HCT116 (cell line): ENCODE measurements at regions of chr1 and their contacts with region 1.

Region 1: GRCh38 chr1:44089371-44090049 is 29.1 kb upstream of the KLF17 start:
- DNase-seq: no peak
- ATAC-seq: peak; percentile 70
- H3K4me3 ChIP-seq: no peak overlapping the region
- H3K27ac ChIP-seq: no peak overlapping the region
- H3K4me1 ChIP-seq: peaks cover 14 to 18% of the 10 kb centered on the region in 2 experiments
- H3K27me3 ChIP-seq: no peaks in the 10 kb centered on the region
- CTCF ChIP-seq: no peak
- POLR2A ChIP-seq: no peak
- RAD21 ChIP-seq: no peak

Region 2: GRCh38 chr1:43801203-43801602 is 288.3 kb before region 1 on chr1:
- CTCF ChIA-PET with region 1: no interaction called
- POLR2A ChIA-PET with region 1: no interaction called
- RAD21 ChIA-PET with region 1: no interaction called
- intact Hi-C with region 1: no loop called
- DNase-seq: no peak
- ATAC-seq: no peak
- H3K4me3 ChIP-seq: no peak overlapping the region
- H3K27ac ChIP-seq: no peak overlapping the region
- H3K4me1 ChIP-seq: peaks cover 0 to 10% of the 10 kb centered on the region in 2 experiments; a peak in 1 of 4 replicates
- H3K27me3 ChIP-seq: no peaks in the 10 kb centered on the region
- CTCF ChIP-seq: no peak
- POLR2A ChIP-seq: no peak
- RAD21 ChIP-seq: no peak

Region 3: DNA sequence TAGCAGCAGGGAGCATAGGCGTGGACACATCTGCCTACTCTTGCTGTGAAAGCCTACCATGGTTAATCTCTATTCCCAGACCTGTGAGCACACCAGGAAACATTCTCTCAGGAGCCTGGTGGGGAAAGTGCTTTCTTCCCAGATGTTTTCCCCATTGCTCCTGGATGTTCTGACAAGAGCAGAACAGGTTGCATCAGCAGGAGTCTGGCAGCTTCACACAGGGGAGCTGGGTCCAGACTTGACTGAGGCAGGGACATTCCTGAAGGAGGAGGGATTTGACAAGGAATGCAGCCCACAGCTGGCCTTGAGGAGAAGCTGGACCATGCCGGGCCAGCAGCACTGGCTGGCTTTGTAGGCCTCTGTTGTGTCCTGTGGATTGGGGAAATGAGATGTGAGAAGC is 176.9 kb before region 1 on chr1:
- CTCF ChIA-PET with region 1: no interaction called
- POLR2A ChIA-PET with region 1: no interaction called
- RAD21 ChIA-PET with region 1: no interaction called
- intact Hi-C with region 1: no loop called
- DNase-seq: no peak
- ATAC-seq: peak; percentile 29; the same call in 1 of the 2 replicates
- H3K4me3 ChIP-seq: no peak overlapping the region
- H3K27ac ChIP-seq: no peak overlapping the region
- H3K4me1 ChIP-seq: peaks cover 0 to 33% of the 10 kb centered on the region in 2 experiments; a peak in 2 of 4 replicates
- H3K27me3 ChIP-seq: no peaks in the 10 kb centered on the region
- CTCF ChIP-seq: no peak
- POLR2A ChIP-seq: no peak
- RAD21 ChIP-seq: no peak

Region 4: DNA sequence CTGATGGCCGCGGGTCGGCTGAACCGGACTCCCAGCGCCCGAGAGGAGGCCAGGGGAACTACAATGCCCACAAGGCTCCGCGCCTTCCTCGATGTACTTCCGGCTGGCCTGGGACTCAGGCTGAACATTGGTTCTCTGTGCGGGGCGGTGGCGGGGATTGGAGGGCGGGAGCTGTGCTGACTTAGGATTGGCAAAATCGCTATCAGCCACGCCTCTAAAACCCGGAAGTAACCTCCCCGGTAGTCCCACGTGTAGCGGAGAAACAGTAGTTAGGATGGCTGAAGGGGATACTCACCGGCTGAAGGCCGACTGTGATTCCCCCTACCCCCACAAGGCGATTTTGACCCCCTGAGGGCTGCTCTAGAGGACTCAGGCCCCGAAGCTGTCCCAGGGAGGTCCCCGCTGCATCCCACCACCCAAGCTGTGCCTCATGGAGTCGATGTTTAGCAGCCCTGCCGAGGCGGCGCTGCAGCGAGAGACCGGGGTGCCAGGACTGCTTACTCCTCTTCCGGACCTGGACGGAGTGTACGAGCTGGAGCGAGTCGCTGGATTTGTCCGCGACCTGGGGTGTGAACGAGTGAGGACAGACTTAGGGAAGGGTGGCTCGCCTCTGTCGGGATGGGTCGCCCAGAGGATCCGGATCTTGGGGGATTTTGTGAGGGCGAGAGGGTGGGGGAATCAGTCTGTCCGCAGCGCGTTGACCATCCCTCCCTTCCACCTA is 119.6 kb before region 1 on chr1 and contains the start of gene DPH2:
- CTCF ChIA-PET with region 1: no interaction called
- POLR2A ChIA-PET with region 1: no interaction called
- RAD21 ChIA-PET with region 1: no interaction called
- intact Hi-C with region 1: no loop called
- DNase-seq: peak; percentile 94
- ATAC-seq: peak; percentile 89
- H3K4me3 ChIP-seq: peak within 1 kb of the TSS; percentile 94 to 99
- H3K27ac ChIP-seq: peak within 1 kb of the TSS; percentile 60
- H3K4me1 ChIP-seq: peaks cover 10 to 30% of the 10 kb centered on the region in 2 experiments
- H3K27me3 ChIP-seq: no peaks in the 10 kb centered on the region
- CTCF ChIP-seq: 0 out of 6 replicates have a peak, but pooled peaks of 2 of the 3 experiments have one; percentile 4 to 12
- POLR2A ChIP-seq: no peak
- RAD21 ChIP-seq: no peak
- total RNA-seq, gene DPH2: 53.2 TPM

Region 5: GRCh38 chr1:44103270-44104131 is 14.0 kb after region 1 on chr1:
- CTCF ChIA-PET with region 1: interaction called, 18 read pairs
- POLR2A ChIA-PET with region 1: no interaction called
- RAD21 ChIA-PET with region 1: no interaction called
- intact Hi-C with region 1: no loop called
- DNase-seq: peak; percentile 18
- ATAC-seq: peak; percentile 53; the same call in 1 of the 2 replicates
- H3K4me3 ChIP-seq: no peak overlapping the region
- H3K27ac ChIP-seq: no peak overlapping the region
- H3K4me1 ChIP-seq: 0 out of 4 replicates have a peak, but pooled peaks cover 0 to 3% of the 10 kb centered on the region in 2 experiments
- H3K27me3 ChIP-seq: peaks cover 5% of the 10 kb centered on the region; the same call in 1 of the 2 replicates
- CTCF ChIP-seq: peak; percentile 38 to 66 (median 64); a peak in 5 of 6 replicates
- POLR2A ChIP-seq: no peak
- RAD21 ChIP-seq: peak; percentile 63

Region 6: DNA sequence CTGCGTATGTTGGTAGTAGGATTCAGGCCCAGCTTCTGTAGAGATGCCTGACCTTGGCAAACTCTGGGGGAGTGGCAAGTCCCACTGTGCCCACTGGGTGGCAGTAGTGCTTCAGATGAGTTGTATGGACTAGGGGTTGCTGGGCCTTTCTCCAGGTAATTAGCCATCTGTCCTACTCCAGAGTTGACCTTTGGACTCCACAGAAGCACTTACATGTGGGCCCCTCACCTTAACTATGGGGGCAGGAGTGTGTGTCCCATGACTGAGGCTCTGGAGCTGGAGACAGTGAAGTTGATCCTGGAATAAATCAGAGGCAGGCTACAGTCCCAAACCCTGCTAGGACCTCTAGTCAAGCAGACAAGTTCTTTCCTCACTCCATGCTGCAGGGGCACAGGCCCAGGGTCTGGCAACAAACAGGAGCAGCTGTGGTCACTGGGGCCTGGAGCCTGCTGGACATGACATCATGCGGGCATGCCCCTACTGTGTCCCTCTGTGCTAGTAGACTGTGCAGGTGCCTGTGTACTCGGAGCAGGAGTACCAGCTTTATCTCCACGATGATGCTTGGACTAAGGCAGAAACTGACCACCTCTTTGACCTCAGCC is 128.4 kb after region 1 on chr1:
- CTCF ChIA-PET with region 1: interaction called, 5 read pairs
- POLR2A ChIA-PET with region 1: no interaction called
- RAD21 ChIA-PET with region 1: no interaction called
- intact Hi-C with region 1: loop called (anchors 5 kb)
- DNase-seq: peak; percentile 38
- ATAC-seq: peak; percentile 78
- H3K4me3 ChIP-seq: no peak overlapping the region
- H3K27ac ChIP-seq: no peak overlapping the region
- H3K4me1 ChIP-seq: peaks cover 6 to 16% of the 10 kb centered on the region in 2 experiments; a peak in 3 of 4 replicates
- H3K27me3 ChIP-seq: no peaks in the 10 kb centered on the region
- CTCF ChIP-seq: peak; percentile 72 to 96 (median 94)
- POLR2A ChIP-seq: no peak
- RAD21 ChIP-seq: peak; percentile 86

Region 7: GRCh38 chr1:44237721-44238457 is 148.4 kb after region 1 on chr1:
- CTCF ChIA-PET with region 1: interaction called, 3 read pairs
- POLR2A ChIA-PET with region 1: no interaction called
- RAD21 ChIA-PET with region 1: no interaction called
- intact Hi-C with region 1: loop called (anchors 5 kb)
- DNase-seq: peak; percentile 50
- ATAC-seq: peak; percentile 100
- H3K4me3 ChIP-seq: no peak overlapping the region
- H3K27ac ChIP-seq: no peak overlapping the region
- H3K4me1 ChIP-seq: peaks cover 19 to 22% of the 10 kb centered on the region in 2 experiments
- H3K27me3 ChIP-seq: no peaks in the 10 kb centered on the region
- CTCF ChIP-seq: peak; percentile 60 to 83 (median 76); a peak in 5 of 6 replicates
- POLR2A ChIP-seq: no peak
- RAD21 ChIP-seq: peak; percentile 55

Region 8: GRCh38 chr1:44318097-44319088 is 228.9 kb after region 1 on chr1:
- CTCF ChIA-PET with region 1: interaction called, 3 read pairs
- POLR2A ChIA-PET with region 1: no interaction called
- RAD21 ChIA-PET with region 1: no interaction called
- intact Hi-C with region 1: loop called (anchors 2 kb)
- DNase-seq: no peak
- ATAC-seq: peak; percentile 63
- H3K4me3 ChIP-seq: no peak overlapping the region
- H3K27ac ChIP-seq: no peak overlapping the region
- H3K4me1 ChIP-seq: no peaks in the 10 kb centered on the region; a peak in 1 of 4 replicates
- H3K27me3 ChIP-seq: no peaks in the 10 kb centered on the region
- CTCF ChIP-seq: peak; percentile 54 to 92 (median 79); a peak in 5 of 6 replicates
- POLR2A ChIP-seq: no peak
- RAD21 ChIP-seq: peak; percentile 49

Region 9: GRCh38 chr1:44594871-44595746 is 505.6 kb after region 1 on chr1:
- CTCF ChIA-PET with region 1: no interaction called
- POLR2A ChIA-PET with region 1: no interaction called
- RAD21 ChIA-PET with region 1: no interaction called
- intact Hi-C with region 1: loop called (anchors 1 kb)
- DNase-seq: peak; percentile 24
- ATAC-seq: peak; percentile 100
- H3K4me3 ChIP-seq: no peak overlapping the region
- H3K27ac ChIP-seq: no peak overlapping the region
- H3K4me1 ChIP-seq: peaks cover 0 to 3% of the 10 kb centered on the region in 2 experiments; a peak in 1 of 4 replicates
- H3K27me3 ChIP-seq: peaks cover 20% of the 10 kb centered on the region
- CTCF ChIP-seq: peak; percentile 91 to 98 (median 97)
- POLR2A ChIP-seq: no peak
- RAD21 ChIP-seq: peak; percentile 98